ENCODE measurements at regions of chr1 and their contacts with region 1.

Region 1: GRCh38 chr1:236103646-236104218 is 38.6 kb upstream of the GPR137B start:
- DNase-seq: peak; percentile 72
- ATAC-seq: peak; percentile 85
- H3K4me3 Mint-ChIP-seq: no peak overlapping the region
- H3K27ac Mint-ChIP-seq: no peak overlapping the region
- H3K4me1 Mint-ChIP-seq: peaks cover 7% of the 10 kb centered on the region
- H3K27me3 Mint-ChIP-seq: peaks cover 5% of the 10 kb centered on the region
- CTCF ChIP-seq: peak; percentile 89

Region 2: GRCh38 chr1:235990376-235991085 is 113.2 kb before region 1 on chr1:
- CTCF ChIA-PET with region 1: no interaction called
- POLR2A ChIA-PET with region 1: no interaction called
- intact Hi-C with region 1: no loop called
- DNase-seq: no peak
- ATAC-seq: no peak
- H3K4me3 Mint-ChIP-seq: no peak overlapping the region
- H3K27ac Mint-ChIP-seq: no peak overlapping the region
- H3K4me1 Mint-ChIP-seq: no peaks in the 10 kb centered on the region
- H3K27me3 Mint-ChIP-seq: peaks cover 3% of the 10 kb centered on the region
- CTCF ChIP-seq: no peak

Region 3: GRCh38 chr1:236489710-236490377 is 386.1 kb after region 1 on chr1:
- CTCF ChIA-PET with region 1: interaction called, 16 read pairs
- POLR2A ChIA-PET with region 1: no interaction called
- intact Hi-C with region 1: loop called (anchors 2 kb)
- DNase-seq: no peak
- ATAC-seq: no peak
- H3K4me3 Mint-ChIP-seq: no peak overlapping the region
- H3K27ac Mint-ChIP-seq: no peak overlapping the region
- H3K4me1 Mint-ChIP-seq: peaks cover 4% of the 10 kb centered on the region
- H3K27me3 Mint-ChIP-seq: peaks cover 27% of the 10 kb centered on the region
- CTCF ChIP-seq: peak; percentile 83

Region 4: DNA sequence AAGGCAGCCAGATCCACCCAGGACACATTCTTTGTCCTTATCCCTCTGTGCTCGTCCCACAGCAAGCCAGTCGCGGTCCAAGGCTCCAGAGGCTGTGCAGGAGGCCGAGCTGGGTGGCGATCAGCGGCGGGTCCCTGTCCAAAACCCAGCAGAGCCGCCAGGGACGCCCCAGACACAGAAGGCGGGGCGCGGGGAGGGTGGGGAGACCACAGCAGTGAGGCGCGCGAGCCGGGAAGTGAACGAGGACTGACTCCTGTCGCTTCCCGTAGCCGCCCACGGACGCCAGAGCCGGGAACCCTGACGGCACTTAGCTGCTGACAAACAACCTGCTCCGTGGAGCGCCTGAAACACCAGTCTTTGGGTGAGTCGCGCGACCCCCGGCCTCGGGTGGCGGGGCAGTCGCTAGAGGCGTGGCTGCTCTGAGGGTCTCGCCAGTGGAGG is 420.0 kb after region 1 on chr1 and contains the start of gene LGALS8:
- CTCF ChIA-PET with region 1: interaction called, 3 read pairs
- POLR2A ChIA-PET with region 1: no interaction called
- intact Hi-C with region 1: loop called (anchors 10 kb)
- DNase-seq: peak; percentile 92
- ATAC-seq: peak; percentile 80
- H3K4me3 Mint-ChIP-seq: peak within 1 kb of the TSS; percentile 84
- H3K27ac Mint-ChIP-seq: peak within 1 kb of the TSS; percentile 97
- H3K4me1 Mint-ChIP-seq: peaks cover 13% of the 10 kb centered on the region
- H3K27me3 Mint-ChIP-seq: no peaks in the 10 kb centered on the region
- CTCF ChIP-seq: no peak
- total RNA-seq, gene LGALS8: 87.3 to 89.3 TPM

Measured in activated CD8-positive, alpha-beta T cell treated with anti-CD3 and anti-CD28 coated beads for 36 hours (primary cell).